ENCODE measurements at regions of chr1 and their contacts with region 1.

Region 1: DNA sequence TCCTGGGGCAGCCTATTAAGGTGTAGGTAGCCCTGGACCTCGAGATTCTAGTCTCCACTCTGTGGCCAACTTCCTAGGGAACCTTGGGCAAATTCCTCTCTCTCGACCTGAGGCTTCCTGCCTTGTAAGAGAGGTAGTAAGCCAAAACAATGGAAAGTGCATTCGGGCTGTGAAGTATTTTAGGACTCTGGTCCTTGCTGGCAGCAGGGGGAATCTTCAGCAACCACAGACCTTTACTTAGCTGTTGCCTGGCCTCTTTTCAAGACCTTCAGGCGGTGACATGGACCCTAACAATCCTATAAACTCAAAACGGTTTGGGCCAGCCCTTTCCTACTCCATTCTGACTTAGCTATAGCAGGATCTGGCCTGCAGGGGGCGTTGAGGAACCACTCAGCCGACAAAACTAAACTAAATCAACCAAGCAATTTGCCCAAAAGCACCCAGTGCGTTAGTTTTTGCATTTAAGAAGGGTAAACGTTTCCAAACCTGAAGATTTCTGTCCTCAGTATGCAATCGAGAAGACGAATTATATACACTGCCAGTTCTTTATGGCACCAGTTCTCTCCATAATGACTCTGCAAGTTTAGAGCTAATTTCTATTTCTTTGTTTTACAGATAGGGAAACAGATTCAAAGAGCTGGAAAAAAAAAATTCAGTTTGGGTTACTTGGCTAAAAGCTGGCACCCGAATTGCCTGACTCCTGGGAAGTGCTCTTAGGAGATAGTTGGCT is 10.9 kb upstream of the SESN2 start:
- DNase-seq: peak; percentile 61
- ATAC-seq: peak; percentile 44
- H3K4me3 ChIP-seq: peak overlapping the region; percentile 54 to 78 (median 75)
- H3K27ac ChIP-seq: peak overlapping the region; percentile 75
- H3K4me1 ChIP-seq: peaks cover 53% of the 10 kb centered on the region
- H3K27me3 ChIP-seq: no peaks in the 10 kb centered on the region
- CTCF ChIP-seq: peak; percentile 89
- EP300 ChIP-seq: no peak
- POLR2A ChIP-seq: no peak
- RAD21 ChIP-seq: peak; percentile 83

Region 2: DNA sequence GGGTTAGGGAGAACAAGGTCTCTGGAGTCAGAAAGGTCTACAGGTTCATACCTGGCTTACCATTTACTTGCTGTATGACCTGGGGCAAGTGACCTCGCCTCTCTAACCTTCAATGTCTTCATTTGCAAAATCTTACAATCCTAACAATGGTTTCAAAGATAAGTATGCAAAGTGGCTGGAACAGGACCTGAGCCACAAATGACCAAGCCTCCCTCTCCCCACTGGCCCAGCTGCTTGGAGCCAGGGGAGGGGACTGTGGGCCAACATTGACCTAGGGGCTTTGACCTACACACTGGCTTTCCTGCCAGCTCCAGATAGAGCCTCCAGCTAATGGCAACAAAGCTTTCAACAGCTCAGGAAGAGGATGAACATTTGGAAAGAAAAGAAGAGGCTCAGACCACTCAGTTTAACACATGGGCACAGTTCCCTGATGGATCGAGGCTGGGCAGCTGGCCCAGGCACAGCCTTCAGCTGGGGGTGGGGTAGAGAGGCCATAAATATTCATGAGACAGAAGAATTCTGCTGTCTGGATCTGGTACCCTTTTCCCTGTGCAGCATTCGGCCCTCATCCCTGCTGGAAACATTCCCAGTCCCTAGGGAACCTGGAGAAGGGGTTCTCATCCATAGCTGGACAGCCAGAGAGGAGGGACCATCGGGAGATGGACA is 84.8 kb before region 1 on chr1:
- CTCF ChIA-PET with region 1: no interaction called
- POLR2A ChIA-PET with region 1: no interaction called
- in situ Hi-C with region 1: no loop called
- intact Hi-C with region 1: no loop called
- DNase-seq: no peak
- ATAC-seq: no peak
- H3K4me3 ChIP-seq: no peak overlapping the region
- H3K27ac ChIP-seq: no peak overlapping the region
- H3K4me1 ChIP-seq: peaks cover 12% of the 10 kb centered on the region
- H3K27me3 ChIP-seq: 0 out of 5 replicates have a peak, but pooled peaks cover 0 to 3% of the 10 kb centered on the region in 2 experiments
- CTCF ChIP-seq: no peak
- EP300 ChIP-seq: no peak
- POLR2A ChIP-seq: no peak
- RAD21 ChIP-seq: no peak

Region 3: GRCh38 chr1:28235755-28236655 is 12.4 kb before region 1 on chr1 and contains the start of gene ATP5IF1:
- CTCF ChIA-PET with region 1: no interaction called
- POLR2A ChIA-PET with region 1: interaction called, 61 read pairs
- in situ Hi-C with region 1: no loop called
- intact Hi-C with region 1: no loop called
- DNase-seq: peak; percentile 96
- ATAC-seq: peak; percentile 96
- H3K4me3 ChIP-seq: peak within 1 kb of the TSS; percentile 82 to 95 (median 93)
- H3K27ac ChIP-seq: peak within 1 kb of the TSS; percentile 91
- H3K4me1 ChIP-seq: peaks cover 40% of the 10 kb centered on the region
- H3K27me3 ChIP-seq: peaks cover 0 to 2% of the 10 kb centered on the region in 2 experiments; a peak in 1 of 5 replicates
- CTCF ChIP-seq: no peak; the same call in 1 of the 2 replicates
- EP300 ChIP-seq: no peak
- POLR2A ChIP-seq: peak; percentile 95 to 99
- RAD21 ChIP-seq: no peak; the same call in 1 of the 2 replicates
- total RNA-seq, gene ATP5IF1: 131 and 143 TPM in 2 replicates

Region 4: GRCh38 chr1:28259307-28260167 is 11.1 kb after region 1 on chr1 and contains the start of gene SESN2:
- CTCF ChIA-PET with region 1: no interaction called
- POLR2A ChIA-PET with region 1: interaction called, 16 read pairs
- in situ Hi-C with region 1: no loop called
- intact Hi-C with region 1: no loop called
- DNase-seq: peak; percentile 95
- ATAC-seq: peak; percentile 92
- H3K4me3 ChIP-seq: peak within 1 kb of the TSS; percentile 98 to 99 (median 99)
- H3K27ac ChIP-seq: peak within 1 kb of the TSS; percentile 70
- H3K4me1 ChIP-seq: peaks cover 58% of the 10 kb centered on the region
- H3K27me3 ChIP-seq: peaks cover 0 to 1% of the 10 kb centered on the region in 2 experiments; a peak in 1 of 5 replicates
- CTCF ChIP-seq: no peak
- EP300 ChIP-seq: 0 out of 4 replicates have a peak, but pooled peaks of 1 of the 2 experiments have one; percentile 27
- POLR2A ChIP-seq: peak; percentile 95 to 96
- RAD21 ChIP-seq: no peak; the same call in 1 of the 2 replicates
- total RNA-seq, gene SESN2: 10.4 and 13.2 TPM in 2 replicates

Region 5: DNA sequence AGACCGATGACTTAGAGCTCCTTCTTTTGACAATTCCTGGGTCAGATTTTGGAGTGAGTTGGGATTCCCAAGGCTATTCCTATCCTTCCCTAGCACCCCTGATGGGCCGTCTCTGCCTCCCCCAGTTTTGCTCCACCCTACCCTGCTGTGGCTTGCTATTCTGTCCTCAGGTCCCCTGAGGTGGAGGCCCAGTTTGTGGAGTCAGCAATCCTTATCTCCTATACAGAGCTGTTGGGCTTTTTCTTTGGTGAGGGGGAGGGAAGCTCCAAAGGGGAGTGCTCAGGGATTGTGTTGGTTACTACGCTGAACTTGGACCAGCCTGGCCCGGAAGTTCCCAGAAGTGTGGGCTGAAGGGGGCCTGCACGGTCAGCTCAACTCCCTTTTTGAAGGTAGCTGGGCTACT is 18.5 kb after region 1 on chr1:
- CTCF ChIA-PET with region 1: no interaction called
- POLR2A ChIA-PET with region 1: interaction called, 15 read pairs
- in situ Hi-C with region 1: no loop called
- intact Hi-C with region 1: no loop called
- DNase-seq: no peak
- ATAC-seq: peak; percentile 54; the same call in 2 of the 3 replicates
- H3K4me3 ChIP-seq: no peak overlapping the region
- H3K27ac ChIP-seq: peak overlapping the region; percentile 7
- H3K4me1 ChIP-seq: peaks cover 82% of the 10 kb centered on the region
- H3K27me3 ChIP-seq: no peaks in the 10 kb centered on the region
- CTCF ChIP-seq: no peak
- EP300 ChIP-seq: no peak
- POLR2A ChIP-seq: no peak
- RAD21 ChIP-seq: no peak

Region 6: GRCh38 chr1:28369371-28370238 is 121.2 kb after region 1 on chr1 and contains the start of gene PHACTR4:
- CTCF ChIA-PET with region 1: interaction called, 13 read pairs
- POLR2A ChIA-PET with region 1: interaction called, 30 read pairs
- in situ Hi-C with region 1: loop called (anchors 5 kb)
- intact Hi-C with region 1: loop called (anchors 1 kb)
- DNase-seq: peak; percentile 92
- ATAC-seq: peak; percentile 96
- H3K4me3 ChIP-seq: peak within 1 kb of the TSS; percentile 70 to 86 (median 86)
- H3K27ac ChIP-seq: peak within 1 kb of the TSS; percentile 99
- H3K4me1 ChIP-seq: peaks cover 51% of the 10 kb centered on the region
- H3K27me3 ChIP-seq: no peaks in the 10 kb centered on the region
- CTCF ChIP-seq: no peak; the same call in none of the 2 replicates
- EP300 ChIP-seq: no peak; a peak in 1 of 4 replicates
- POLR2A ChIP-seq: peak; percentile 72 to 93
- RAD21 ChIP-seq: peak; percentile 47; the same call in 1 of the 2 replicates
- total RNA-seq, gene PHACTR4: 17.1 and 29.6 TPM in 2 replicates

Measured in HepG2 (cell line).